HEK293T (cell line): ENCODE measurements at regions of chr13 and their contacts with region 1.

Region 1: GRCh38 chr13:26074706-26075105 is 22.9 kb upstream of the SHISA2 start:
- DNase-seq: no peak

Region 2: DNA sequence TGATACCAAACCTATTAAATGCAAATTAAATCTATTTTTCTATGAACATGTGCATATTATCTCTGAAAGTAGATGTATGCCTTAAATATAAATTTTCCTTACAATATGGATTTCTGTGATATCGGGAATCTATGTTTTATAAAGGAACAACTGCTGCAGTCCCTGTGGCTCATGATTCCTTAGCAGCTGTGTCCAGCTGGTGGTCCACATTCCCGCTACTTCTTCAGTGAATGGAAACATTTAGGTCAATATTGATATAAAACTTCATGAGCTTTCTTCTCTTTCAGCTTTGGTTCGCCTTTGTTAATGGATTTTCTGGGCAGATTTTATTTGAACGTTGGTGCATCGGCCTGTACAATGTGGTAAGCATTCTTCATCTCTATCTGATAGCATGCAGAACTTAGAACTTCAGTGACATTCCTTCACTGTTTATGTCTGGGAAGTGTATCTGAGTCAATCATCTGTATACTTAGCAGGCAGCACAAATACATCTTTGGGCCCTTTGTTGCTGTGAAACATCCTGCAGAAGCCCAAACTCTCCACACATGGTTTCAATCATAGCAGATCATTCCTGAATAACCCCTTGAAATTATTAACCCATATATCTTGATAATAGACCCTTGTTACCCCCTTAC is 246.8 kb before region 1 on chr13:
- CTCF ChIA-PET with region 1: interaction called, 12 read pairs
- POLR2A ChIA-PET with region 1: no interaction called
- DNase-seq: no peak

Region 3: DNA sequence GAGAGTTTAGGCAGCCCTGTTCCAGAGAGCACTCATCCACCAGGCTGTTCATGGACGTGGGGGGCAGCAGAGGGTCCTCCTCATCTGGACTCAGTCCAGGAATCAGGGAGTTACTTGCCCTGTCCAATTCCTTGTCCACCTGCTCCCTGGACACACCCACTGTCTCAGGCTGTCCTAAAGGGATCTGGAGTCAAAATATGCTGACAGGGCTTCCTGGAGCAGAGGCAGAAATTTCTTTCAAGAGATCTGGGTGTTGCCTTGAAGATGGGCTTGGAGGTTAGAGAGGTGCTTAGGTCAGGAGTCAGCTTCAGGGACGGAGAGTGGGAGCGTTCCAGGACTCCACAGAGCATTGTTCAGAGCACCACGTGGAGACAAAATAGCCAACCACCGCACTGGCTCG is 42.9 kb after region 1 on chr13:
- CTCF ChIA-PET with region 1: no interaction called
- POLR2A ChIA-PET with region 1: no interaction called
- DNase-seq: no peak

Region 4: DNA sequence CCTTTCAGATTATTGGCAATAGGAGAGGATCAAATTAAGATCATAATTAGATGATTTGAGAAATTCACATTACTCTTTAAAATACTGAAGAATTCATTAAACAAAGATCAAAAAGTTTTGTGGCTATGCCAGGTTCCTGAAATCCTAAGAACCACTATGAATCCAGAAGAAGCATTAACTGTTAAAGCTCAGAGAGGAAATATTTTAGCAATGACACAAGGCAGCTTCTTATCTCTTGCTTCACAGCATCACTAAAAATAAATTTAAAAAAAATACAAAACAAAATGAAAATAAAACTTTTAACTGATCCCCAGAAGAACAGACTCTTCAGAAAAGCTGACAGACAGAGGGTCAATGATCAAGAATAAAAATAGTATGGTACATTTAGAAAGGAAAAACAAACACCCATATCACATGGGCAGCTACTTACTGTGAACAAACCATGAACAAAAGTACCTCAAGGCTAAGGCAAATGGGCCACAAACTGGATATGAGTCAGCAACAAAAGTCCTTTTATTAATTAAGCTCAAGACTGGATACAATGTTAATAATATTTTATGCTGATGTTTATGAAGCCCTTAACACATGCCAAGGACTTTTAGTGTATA is 127.8 kb after region 1 on chr13:
- CTCF ChIA-PET with region 1: interaction called, 11 read pairs
- POLR2A ChIA-PET with region 1: no interaction called
- DNase-seq: no peak